ENCODE measurements at regions of chr16 and their contacts with region 1.

Region 1: DNA sequence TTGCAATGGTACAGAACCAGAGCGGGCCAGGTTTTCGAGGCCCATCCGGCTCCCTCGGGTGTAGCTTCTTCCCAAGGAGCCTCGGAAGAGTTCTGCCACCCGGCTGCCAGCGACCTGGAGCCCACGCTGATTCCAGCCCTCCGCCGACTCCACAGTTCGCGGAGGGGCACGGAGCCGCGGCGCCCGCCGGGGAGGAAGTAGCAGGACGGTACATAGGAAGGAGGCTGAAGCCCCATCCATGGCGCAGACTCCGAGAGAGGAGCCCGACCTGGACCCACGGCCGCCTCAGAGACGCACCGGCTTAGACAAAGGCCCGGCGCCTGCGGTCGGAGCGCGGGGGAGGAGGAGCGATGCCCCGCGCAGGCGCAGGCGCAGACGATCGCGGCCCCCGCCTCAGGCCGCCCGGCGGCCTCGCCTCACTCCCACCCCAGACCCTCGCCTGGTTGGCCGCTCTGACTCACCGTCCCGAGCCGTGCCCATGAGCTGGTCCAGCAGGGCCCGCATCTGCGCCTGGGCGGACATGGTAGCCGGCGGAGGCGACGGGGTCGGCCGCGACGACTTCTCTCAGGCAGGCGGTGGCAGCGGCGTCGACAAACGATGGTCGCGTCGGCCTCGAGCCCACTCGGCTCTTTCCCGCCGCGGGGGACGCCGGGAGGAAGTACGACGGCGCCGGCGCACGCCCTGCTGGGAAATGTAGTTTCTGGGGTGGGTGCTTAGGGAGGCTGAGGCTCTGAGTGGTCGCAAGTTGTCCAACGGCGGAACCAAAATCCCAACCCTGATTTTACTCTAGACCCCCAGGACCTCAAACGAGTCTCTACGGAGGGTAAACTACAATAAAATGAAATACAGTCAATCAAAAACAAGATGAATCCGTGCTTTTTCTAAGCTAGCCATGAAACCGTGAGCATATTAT is at the start of gene LUC7L:
- DNase-seq: peak; percentile 45
- H3K4me3 ChIP-seq: peak within 1 kb of the TSS; percentile 94
- H3K27ac ChIP-seq: peak within 1 kb of the TSS; percentile 96
- H3K27me3 ChIP-seq: no peaks in the 10 kb centered on the region
- CTCF ChIP-seq: no peak
- polyA plus RNA-seq, gene LUC7L: 37.6 and 47.2 TPM in 2 replicates

Region 2: GRCh38 chr16:352547-353403 is 123.7 kb after region 1 on chr16 and contains the start of gene AXIN1:
- CTCF ChIA-PET with region 1: interaction called, 13 read pairs
- POLR2A ChIA-PET with region 1: interaction called, 4 read pairs
- DNase-seq: peak; percentile 61
- H3K4me3 ChIP-seq: peak within 1 kb of the TSS; percentile 72
- H3K27ac ChIP-seq: no peak within 1 kb of the TSS
- H3K27me3 ChIP-seq: no peaks in the 10 kb centered on the region
- CTCF ChIP-seq: peak; percentile 32; the same call in 1 of the 2 replicates
- polyA plus RNA-seq, gene AXIN1: 3.5 and 4.7 TPM in 2 replicates

Region 3: DNA sequence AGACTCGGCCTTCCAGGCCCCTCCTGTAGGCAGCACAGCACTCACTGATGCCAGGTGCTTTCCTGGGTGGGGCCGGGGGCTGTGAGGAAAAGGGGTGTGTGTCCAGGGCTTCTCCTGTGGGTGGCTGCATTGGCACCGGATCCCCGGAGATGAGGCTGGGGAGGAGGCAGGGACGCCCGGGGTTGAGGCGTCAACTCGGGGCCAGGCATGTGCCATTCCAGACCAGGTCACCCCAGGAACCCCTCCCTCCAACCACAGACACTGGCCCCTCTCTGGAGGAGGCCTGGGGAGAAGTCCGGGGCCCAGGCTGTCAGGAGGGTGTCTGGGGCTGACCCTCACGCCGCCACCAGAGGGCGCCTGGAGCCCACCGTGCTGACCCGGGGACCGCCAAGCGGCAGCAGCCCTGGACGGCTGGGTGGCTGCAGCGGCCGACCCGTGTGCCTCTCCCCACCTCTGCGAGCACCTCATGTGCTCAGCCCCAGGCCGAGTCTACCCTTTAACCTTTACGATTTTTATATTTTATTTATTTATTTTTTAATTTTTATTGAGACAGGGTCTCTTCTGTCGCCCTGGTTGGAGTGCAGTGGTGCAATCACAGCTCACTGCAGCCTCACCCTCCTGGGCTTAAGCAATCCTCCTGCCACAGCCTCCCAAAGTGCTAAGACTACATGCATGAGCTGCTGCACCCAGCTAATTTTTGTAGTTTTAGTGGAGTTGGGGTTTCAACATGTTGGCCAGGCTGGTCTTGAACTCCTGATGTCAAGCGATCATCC is 482.7 kb after region 1 on chr16:
- CTCF ChIA-PET with region 1: no interaction called
- POLR2A ChIA-PET with region 1: no interaction called
- DNase-seq: no peak
- H3K4me3 ChIP-seq: no peak overlapping the region
- H3K27ac ChIP-seq: no peak overlapping the region
- H3K27me3 ChIP-seq: peaks cover 15% of the 10 kb centered on the region
- CTCF ChIP-seq: peak; percentile 88

Measured in AG04450 (cell line).